Heart left ventricle (tissue), 16 donors: ENCODE measurements at regions of chr1 and their contacts with region 1.

Region 1: DNA sequence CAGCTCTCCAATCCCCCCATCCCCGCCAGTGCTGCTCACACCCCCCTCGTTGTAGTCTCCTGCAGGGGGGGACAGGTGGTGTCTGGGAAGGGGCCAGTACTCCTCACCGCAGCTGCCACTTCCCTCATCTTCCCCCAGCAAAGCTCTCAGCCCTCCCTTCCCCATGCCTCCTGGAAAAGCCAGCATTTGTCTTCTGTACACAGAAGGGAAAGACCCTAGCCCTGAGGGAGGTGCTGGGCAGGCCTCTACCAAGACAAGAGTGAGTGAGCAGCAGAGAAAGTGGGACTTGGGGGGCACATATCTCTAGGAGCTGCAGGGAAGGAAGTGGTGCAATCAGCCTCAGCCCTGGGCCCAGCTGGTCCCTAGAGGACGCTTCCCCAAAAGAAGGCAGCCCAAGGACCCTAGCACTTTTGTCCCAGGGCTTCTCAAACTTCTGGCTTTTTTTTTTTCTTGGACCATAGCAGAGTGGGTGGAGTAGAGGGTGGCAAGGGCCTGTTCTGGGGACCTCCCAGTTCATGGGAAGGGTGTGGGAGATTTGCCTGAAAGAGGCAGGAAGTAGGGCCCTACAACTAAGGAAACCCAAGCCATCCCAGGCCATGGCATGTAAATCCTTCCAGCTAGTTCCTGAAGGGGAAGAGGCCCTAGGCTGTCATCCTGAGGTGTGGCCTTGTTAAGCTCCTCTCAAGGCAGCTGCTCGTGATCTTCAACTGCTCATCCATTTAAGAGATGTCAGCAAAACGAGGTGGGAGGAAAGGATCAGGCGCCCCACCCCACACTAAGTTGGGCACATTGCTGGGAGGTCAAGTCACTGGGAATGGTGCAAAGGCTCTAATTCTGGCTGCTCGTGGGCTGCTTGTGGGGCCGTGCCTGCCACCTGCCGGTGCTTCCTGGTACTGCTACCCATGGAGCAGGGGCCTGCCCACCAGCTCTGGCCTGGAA is 12.6 kb downstream of the ZC3H12A start:
- DNase-seq: peak; percentile 68 to 91 (median 80)
- ATAC-seq: peak; percentile 49 to 84 (median 76)
- H3K4me3 ChIP-seq: no peak overlapping the region
- H3K27ac ChIP-seq: peak overlapping the region; percentile 22 to 81 (median 62)
- H3K4me1 ChIP-seq: peaks cover 0 to 42% (median 31%) of the 10 kb centered on the region in 12 donors
- H3K27me3 ChIP-seq: no peaks in the 10 kb centered on the region
- CTCF ChIP-seq: peak; percentile 95 to 99 (median 98)
- POLR2A ChIP-seq: peak in 1 of 2 donors; percentile 22

Region 2: DNA sequence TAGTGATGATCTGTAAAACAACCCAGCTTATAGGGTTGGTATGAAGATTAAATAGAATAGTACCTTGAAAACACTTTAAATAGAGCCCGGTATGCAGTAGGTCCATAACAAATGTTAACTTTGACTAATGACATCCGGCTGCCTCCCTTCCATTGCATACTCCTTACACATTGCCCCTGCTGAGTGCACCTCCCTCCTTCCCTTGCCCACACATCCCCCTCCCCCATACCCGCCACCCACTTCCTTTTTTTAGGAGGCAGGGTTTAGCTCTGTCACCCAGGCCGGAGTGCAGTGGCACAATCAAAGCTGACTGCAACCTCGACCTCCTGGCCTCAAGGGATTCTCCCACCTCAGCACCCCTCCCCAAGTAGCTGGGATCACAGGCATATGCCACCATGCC is 37.0 kb before region 1 on chr1:
- intact Hi-C with region 1: loop called (anchors 1 to 2 kb)
- DNase-seq: peak in 1 of 5 donors; percentile 38
- ATAC-seq: no peak
- H3K4me3 ChIP-seq: no peak overlapping the region
- H3K27ac ChIP-seq: no peak overlapping the region
- H3K4me1 ChIP-seq: peaks cover 0 to 11% (median under 1%) of the 10 kb centered on the region in 12 donors
- H3K27me3 ChIP-seq: peaks cover 0 to 32% (median 6%) of the 10 kb centered on the region in 9 donors
- CTCF ChIP-seq: no peak
- POLR2A ChIP-seq: no peak

Region 3: GRCh38 chr1:37458528-37458927 is 28.4 kb before region 1 on chr1:
- intact Hi-C with region 1: loop called (anchors 1 to 2 kb)
- DNase-seq: no peak
- ATAC-seq: no peak
- H3K4me3 ChIP-seq: no peak overlapping the region
- H3K27ac ChIP-seq: no peak overlapping the region
- H3K4me1 ChIP-seq: peaks cover 0 to 10% (median 4%) of the 10 kb centered on the region in 12 donors
- H3K27me3 ChIP-seq: no peaks in the 10 kb centered on the region
- CTCF ChIP-seq: no peak
- POLR2A ChIP-seq: no peak